K562 (cell line): ENCODE measurements at regions of chr4 and their contacts with region 1.

Region 1: DNA sequence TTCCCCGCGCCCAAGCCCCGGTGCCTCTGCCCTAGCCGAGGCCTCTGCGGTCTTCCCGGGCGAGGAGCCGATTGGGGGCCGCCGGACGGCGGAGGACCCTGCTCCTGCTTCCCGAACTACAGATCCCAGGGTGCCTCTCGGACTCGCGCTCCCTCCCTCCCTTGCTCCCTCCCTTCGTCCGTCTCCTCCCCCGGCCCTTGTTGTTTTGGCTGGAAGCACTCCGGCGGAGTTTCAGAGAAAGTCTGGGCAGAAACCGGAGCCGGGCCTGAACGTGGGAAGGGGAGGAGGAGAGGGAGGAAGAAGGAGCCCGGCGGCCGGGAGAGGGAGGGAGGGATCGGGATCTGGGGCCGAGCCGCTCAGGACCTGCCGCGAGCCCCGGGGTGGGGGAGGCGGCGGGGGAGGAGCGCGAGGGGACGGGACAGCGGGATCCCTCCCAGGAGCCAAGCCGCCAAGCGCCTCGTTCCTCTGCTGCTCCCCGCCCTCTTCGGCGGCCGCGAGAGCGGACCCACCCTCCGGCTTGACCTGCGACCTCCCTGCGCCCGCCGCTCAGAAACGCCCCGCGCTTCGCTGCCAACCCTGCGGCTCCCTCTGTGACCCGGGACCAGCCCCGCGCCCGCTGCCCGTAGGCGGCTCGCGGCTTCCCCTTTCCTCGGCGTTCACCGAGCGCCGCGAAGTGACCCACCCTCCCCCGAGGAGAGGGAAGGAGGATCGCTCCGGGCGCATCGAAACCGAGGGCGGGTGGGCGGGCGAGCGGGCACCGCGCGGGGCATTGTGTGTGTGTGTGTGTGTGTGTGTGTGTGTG is 496 bp upstream of the GAB1 start:
- DNase-seq: peak; percentile 75 to 86 (median 82)
- ATAC-seq: peak; percentile 83
- H3K4me3 ChIP-seq: peak overlapping the region; percentile 84
- H3K27ac ChIP-seq: peak overlapping the region; percentile 83
- H3K4me1 ChIP-seq: peaks cover 5 to 23% of the 10 kb centered on the region in 2 experiments; a peak in 4 of 5 replicates
- H3K27me3 ChIP-seq: no peaks in the 10 kb centered on the region
- CTCF ChIP-seq: no peak
- EP300 ChIP-seq: no peak
- POLR2A ChIP-seq: peak; percentile 67
- RAD21 ChIP-seq: no peak

Region 2: GRCh38 chr4:143184217-143185116 is 151.7 kb before region 1 on chr4 and contains the start of gene USP38:
- CTCF ChIA-PET with region 1: no interaction called
- POLR2A ChIA-PET with region 1: no interaction called
- in situ Hi-C with region 1: no loop called
- intact Hi-C with region 1: loop called (anchors 5 kb)
- DNase-seq: peak; percentile 91 to 96 (median 94)
- ATAC-seq: peak; percentile 88
- H3K4me3 ChIP-seq: peak within 1 kb of the TSS; percentile 83
- H3K27ac ChIP-seq: peak within 1 kb of the TSS; percentile 92
- H3K4me1 ChIP-seq: peaks cover 0 to 8% of the 10 kb centered on the region in 2 experiments; a peak in 3 of 5 replicates
- H3K27me3 ChIP-seq: no peaks in the 10 kb centered on the region
- CTCF ChIP-seq: peak in 2 of 3 experiments; percentile 8 to 12; a peak in 1 of 6 replicates
- EP300 ChIP-seq: no peak
- POLR2A ChIP-seq: peak; percentile 93
- RAD21 ChIP-seq: no peak
- polyA plus RNA-seq, gene USP38: 4.2 to 4.7 TPM

Region 3: DNA sequence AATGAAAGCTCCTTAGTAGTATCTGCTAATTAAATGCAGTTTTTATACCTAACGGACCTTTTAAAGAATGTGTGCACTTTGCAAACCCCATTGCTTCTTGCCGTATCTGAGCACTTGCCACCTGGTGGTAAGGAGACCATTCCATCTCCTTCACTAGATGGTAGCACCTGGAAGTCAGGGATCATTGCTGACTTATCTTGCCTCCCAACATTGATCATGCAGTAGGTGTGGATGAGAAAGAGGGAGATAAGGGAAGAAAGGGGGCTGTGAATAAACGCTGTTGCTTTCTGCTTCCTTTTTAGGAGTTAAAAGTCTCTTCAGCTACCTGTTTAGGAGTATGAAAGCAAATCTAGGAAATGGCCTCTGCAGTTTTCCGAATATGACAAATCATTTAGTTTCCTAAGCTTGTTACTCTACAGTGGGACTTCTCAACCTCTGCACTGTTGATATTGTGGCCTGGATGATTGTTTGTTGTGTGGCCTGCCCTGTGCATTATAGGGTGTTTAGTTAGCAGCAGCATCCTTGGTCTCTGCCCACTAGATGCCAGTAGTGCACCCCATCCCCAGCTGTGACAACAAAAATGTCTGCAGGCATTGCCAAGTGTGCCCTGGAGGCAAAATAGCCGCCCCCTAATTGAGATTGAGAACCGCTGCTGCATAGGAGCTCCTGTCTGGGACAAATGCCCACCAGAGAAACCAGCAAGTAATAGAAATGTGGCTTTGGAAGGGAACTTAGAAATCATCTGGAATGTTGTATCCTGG is 39.3 kb after region 1 on chr4:
- CTCF ChIA-PET with region 1: no interaction called
- POLR2A ChIA-PET with region 1: interaction called, 4 read pairs
- in situ Hi-C with region 1: no loop called
- intact Hi-C with region 1: loop called (anchors 2 kb)
- DNase-seq: peak; percentile 39 to 57 (median 50)
- ATAC-seq: peak; percentile 68
- H3K4me3 ChIP-seq: no peak overlapping the region
- H3K27ac ChIP-seq: no peak overlapping the region
- H3K4me1 ChIP-seq: peaks cover 10 to 23% of the 10 kb centered on the region in 2 experiments; a peak in 4 of 5 replicates
- H3K27me3 ChIP-seq: no peaks in the 10 kb centered on the region
- CTCF ChIP-seq: peak; percentile 20 to 40 (median 27); a peak in 3 of 6 replicates
- EP300 ChIP-seq: 0 out of 2 replicates have a peak, but pooled peaks have one; percentile 14
- POLR2A ChIP-seq: no peak
- RAD21 ChIP-seq: peak in 1 of 2 experiments; percentile 26; a peak in 2 of 4 replicates

Region 4: DNA sequence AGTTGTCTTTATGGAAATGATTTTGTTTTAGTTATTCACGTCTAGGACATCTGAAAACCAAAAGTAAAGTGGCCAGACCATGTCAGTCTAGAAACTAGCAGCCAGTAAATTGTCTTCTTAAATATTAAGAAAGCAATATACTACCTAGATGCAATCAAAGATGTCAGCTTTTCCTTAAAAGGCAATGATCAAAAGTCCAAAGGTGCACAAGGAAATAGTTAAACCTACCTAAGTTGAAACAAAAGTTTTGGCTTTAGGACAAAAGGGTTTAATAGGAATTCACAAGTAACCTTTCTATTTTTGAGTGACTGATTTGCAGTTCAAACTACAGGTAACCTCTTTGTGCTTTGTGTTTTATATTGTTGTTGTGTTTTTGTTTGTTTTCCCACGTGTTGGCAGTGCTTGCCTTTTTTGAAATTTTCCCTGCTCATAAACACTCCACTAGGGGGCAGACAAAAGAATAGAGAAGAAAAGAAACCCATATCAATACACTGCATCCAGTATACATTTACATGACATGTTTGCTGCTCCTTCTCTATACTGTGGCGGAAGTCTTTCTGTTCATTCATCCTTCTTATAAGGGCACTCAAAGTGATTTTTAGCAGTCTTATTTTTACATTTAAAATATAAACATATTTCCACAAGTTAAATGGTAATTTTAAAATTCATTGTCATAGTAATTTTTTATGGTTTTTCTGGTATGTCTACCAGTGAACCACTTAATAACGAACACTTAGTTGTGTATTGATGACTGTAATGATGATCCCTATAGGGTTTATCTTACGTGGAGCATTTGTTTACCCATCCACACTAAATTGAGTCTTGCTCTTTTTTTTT is 63.2 kb after region 1 on chr4:
- CTCF ChIA-PET with region 1: no interaction called
- POLR2A ChIA-PET with region 1: interaction called, 3 read pairs
- in situ Hi-C with region 1: no loop called
- intact Hi-C with region 1: loop called (anchors 1 kb)
- DNase-seq: peak; percentile 26 to 61 (median 32)
- ATAC-seq: peak; percentile 82
- H3K4me3 ChIP-seq: no peak overlapping the region
- H3K27ac ChIP-seq: no peak overlapping the region
- H3K4me1 ChIP-seq: peaks cover 0 to 3% of the 10 kb centered on the region in 2 experiments; a peak in 2 of 5 replicates
- H3K27me3 ChIP-seq: no peaks in the 10 kb centered on the region
- CTCF ChIP-seq: peak; percentile 64 to 70 (median 65)
- EP300 ChIP-seq: no peak
- POLR2A ChIP-seq: no peak
- RAD21 ChIP-seq: peak; percentile 46 to 56

Region 5: DNA sequence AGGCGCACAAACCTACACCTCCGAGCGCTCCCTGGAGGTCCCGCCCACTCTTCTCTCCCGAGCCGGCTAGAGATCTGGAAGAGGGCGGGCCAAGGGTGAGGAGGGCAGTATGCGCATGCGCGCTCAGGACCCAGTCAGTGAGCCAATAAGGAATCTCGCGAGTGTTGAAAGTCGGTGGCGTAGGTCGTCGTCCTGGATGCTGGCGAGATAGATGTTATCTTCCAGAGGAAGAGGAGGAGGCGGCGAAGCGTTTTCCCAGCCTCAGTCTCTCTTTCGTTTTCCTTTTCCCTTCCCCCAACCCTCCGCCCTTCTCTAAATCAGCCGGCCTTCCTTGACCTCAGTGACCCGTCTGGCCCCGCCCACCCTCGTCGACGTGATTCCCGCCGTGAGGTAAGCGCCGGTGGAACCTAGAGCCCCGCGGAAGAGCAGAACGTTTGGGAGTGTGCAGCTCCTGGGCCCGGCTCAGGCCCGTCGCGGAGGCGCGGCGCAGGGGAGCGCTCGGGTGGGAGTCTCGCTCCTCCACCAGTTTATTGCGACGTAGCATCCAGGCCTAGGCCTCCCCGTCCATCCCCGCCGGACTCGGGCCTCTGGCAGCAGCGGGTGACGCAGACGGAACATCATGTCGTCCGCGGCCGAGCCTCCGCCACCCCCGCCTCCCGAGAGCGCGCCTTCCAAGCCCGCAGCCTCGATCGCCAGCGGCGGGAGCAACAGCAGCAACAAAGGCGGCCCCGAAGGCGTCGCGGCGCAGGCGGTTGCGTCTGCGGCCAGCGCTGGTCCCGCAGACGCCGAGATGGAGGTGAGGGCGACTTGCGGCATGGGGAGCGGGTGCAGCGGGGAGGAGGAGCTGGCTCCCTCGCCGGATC is 177.4 kb after region 1 on chr4 and contains the start of gene SMARCA5:
- CTCF ChIA-PET with region 1: no interaction called
- POLR2A ChIA-PET with region 1: interaction called, 3 read pairs
- in situ Hi-C with region 1: no loop called
- intact Hi-C with region 1: loop called (anchors 5 kb)
- DNase-seq: peak; percentile 98 to 99 (median 99)
- ATAC-seq: peak; percentile 87
- H3K4me3 ChIP-seq: peak within 1 kb of the TSS; percentile 81
- H3K27ac ChIP-seq: peak within 1 kb of the TSS; percentile 87
- H3K4me1 ChIP-seq: peaks cover 0 to 8% of the 10 kb centered on the region in 2 experiments; a peak in 3 of 5 replicates
- H3K27me3 ChIP-seq: no peaks in the 10 kb centered on the region
- CTCF ChIP-seq: no peak; a peak in 2 of 6 replicates
- EP300 ChIP-seq: no peak
- POLR2A ChIP-seq: peak; percentile 81
- RAD21 ChIP-seq: no peak
- polyA plus RNA-seq, gene SMARCA5: 21.6 to 23.1 TPM